ENCODE measurements at regions of chr11 and their contacts with region 1.

Region 1: DNA sequence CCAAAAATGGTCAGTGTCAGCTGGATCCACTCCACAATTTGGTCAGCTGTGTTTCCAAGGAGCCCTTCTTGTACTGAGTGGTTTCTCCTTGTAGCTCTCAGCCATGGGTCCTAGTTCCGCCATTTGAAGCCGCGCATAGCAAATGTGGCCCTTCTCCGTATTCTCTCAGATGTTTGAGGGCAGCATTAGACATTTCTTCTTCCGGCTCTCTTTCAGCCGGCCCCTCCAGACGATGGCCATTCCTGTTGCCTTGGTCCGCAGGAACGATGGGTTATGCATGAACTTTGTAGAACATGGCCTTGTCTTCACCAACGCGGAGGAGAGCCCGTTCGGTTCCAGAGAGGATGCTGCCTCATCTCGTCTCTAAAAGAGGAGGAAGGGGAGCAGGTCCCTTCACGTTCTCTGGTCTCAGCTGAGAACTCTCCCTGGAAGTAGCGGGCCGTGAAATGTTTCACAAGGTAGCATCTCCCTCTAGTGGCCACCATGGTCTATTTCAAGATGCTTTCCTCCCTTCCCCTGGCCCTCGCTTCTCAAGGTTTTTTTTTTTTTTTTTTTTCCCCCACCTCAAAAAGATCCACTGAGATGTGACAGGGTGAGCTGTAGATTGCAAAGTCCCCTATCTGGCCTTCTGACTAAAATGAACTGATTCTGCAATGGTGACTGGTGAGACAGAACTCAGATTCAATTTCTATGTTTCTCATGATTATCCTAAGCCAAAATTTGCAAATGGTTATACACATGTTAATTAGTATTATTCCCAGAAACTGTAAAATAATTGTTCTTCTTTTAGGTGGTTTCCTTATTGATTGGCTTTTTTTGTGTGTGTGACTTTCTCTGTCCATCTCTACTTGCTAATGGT is 19.8 kb upstream of the PLET1 start:
- DNase-seq: peak; percentile 95
- H3K4me3 ChIP-seq: peak overlapping the region; percentile 49
- H3K27ac ChIP-seq: no peak overlapping the region
- H3K4me1 ChIP-seq: peaks cover 18% of the 10 kb centered on the region
- H3K27me3 ChIP-seq: no peaks in the 10 kb centered on the region
- CTCF ChIP-seq: peak; percentile 81

Region 2: GRCh38 chr11:111540114-111540936 is 740.2 kb before region 1 on chr11 and contains the start of gene LAYN:
- CTCF ChIA-PET with region 1: interaction called, 12 read pairs
- POLR2A ChIA-PET with region 1: no interaction called
- intact Hi-C with region 1: no loop called
- DNase-seq: peak; percentile 81
- H3K4me3 ChIP-seq: peak within 1 kb of the TSS; percentile 63
- H3K27ac ChIP-seq: no peak within 1 kb of the TSS
- H3K4me1 ChIP-seq: peaks cover 16% of the 10 kb centered on the region
- H3K27me3 ChIP-seq: no peaks in the 10 kb centered on the region
- CTCF ChIP-seq: no peak
- total RNA-seq, gene LAYN: 9.6 and 10.0 TPM in 2 replicates

Region 3: GRCh38 chr11:111878849-111879636 is 401.5 kb before region 1 on chr11 and contains the starts of genes CFAP68 and FDXACB1:
- CTCF ChIA-PET with region 1: interaction called, 3 read pairs
- POLR2A ChIA-PET with region 1: no interaction called
- intact Hi-C with region 1: loop called (anchors 10 kb)
- DNase-seq: peak; percentile 99
- H3K4me3 ChIP-seq: peak within 1 kb of the TSS; percentile 65
- H3K27ac ChIP-seq: peak within 1 kb of the TSS; percentile 96
- H3K4me1 ChIP-seq: peaks cover 4% of the 10 kb centered on the region
- H3K27me3 ChIP-seq: no peaks in the 10 kb centered on the region
- CTCF ChIP-seq: peak; percentile 99
- total RNA-seq, gene CFAP68: 16.5 and 16.9 TPM in 2 replicates
- total RNA-seq, gene FDXACB1: 5.4 TPM in 2 replicates

Region 4: GRCh38 chr11:112113539-112114457 is 166.7 kb before region 1 on chr11:
- CTCF ChIA-PET with region 1: interaction called, 17 read pairs
- POLR2A ChIA-PET with region 1: no interaction called
- intact Hi-C with region 1: loop called (anchors 1 kb)
- DNase-seq: peak; percentile 82
- H3K4me3 ChIP-seq: no peak overlapping the region
- H3K27ac ChIP-seq: no peak overlapping the region
- H3K4me1 ChIP-seq: peaks cover 5% of the 10 kb centered on the region
- H3K27me3 ChIP-seq: no peaks in the 10 kb centered on the region
- CTCF ChIP-seq: peak; percentile 76

Region 5: GRCh38 chr11:112219476-112220232 is 60.8 kb before region 1 on chr11:
- CTCF ChIA-PET with region 1: interaction called, 32 read pairs
- POLR2A ChIA-PET with region 1: interaction called, 3 read pairs
- intact Hi-C with region 1: loop called (anchors 1 kb)
- DNase-seq: peak; percentile 90
- H3K4me3 ChIP-seq: no peak overlapping the region
- H3K27ac ChIP-seq: no peak overlapping the region
- H3K4me1 ChIP-seq: peaks cover 27% of the 10 kb centered on the region
- H3K27me3 ChIP-seq: no peaks in the 10 kb centered on the region
- CTCF ChIP-seq: peak; percentile 90